ENCODE measurements at regions of chr5 and their contacts with region 1.

Region 1: GRCh38 chr5:16666883-16667398 is 50.1 kb upstream of the RETREG1 start:
- DNase-seq: peak in 6 of 9 experiments; percentile 19 to 66 (median 40)
- ATAC-seq: no peak
- H3K4me3 ChIP-seq: no peak overlapping the region
- H3K4me3 Mint-ChIP-seq: no peak overlapping the region
- H3K27ac ChIP-seq: no peak overlapping the region
- H3K27ac Mint-ChIP-seq: no peak overlapping the region
- H3K4me1 ChIP-seq: no peaks in the 10 kb centered on the region
- H3K4me1 Mint-ChIP-seq: peaks cover 18% of the 10 kb centered on the region
- H3K27me3 ChIP-seq: no peaks in the 10 kb centered on the region
- H3K27me3 Mint-ChIP-seq: no peaks in the 10 kb centered on the region
- CTCF ChIP-seq: peak; percentile 59

Region 2: GRCh38 chr5:16456103-16456832 is 210.7 kb before region 1 on chr5:
- CTCF ChIA-PET with region 1: interaction called, 30 read pairs
- POLR2A ChIA-PET with region 1: no interaction called
- intact Hi-C with region 1: loop called in 1 of 2 experiments (anchors 2 kb)
- DNase-seq: peak in 4 of 9 experiments; percentile 20 to 80 (median 51)
- ATAC-seq: peak; percentile 76
- H3K4me3 ChIP-seq: no peak overlapping the region
- H3K4me3 Mint-ChIP-seq: peak overlapping the region; percentile 29
- H3K27ac ChIP-seq: peak overlapping the region in 1 of 2 experiments; percentile 41
- H3K27ac Mint-ChIP-seq: peak overlapping the region; percentile 65
- H3K4me1 ChIP-seq: peaks cover 38% of the 10 kb centered on the region
- H3K4me1 Mint-ChIP-seq: peaks cover 67% of the 10 kb centered on the region
- H3K27me3 ChIP-seq: no peaks in the 10 kb centered on the region
- H3K27me3 Mint-ChIP-seq: no peaks in the 10 kb centered on the region
- CTCF ChIP-seq: peak; percentile 77

Region 3: DNA sequence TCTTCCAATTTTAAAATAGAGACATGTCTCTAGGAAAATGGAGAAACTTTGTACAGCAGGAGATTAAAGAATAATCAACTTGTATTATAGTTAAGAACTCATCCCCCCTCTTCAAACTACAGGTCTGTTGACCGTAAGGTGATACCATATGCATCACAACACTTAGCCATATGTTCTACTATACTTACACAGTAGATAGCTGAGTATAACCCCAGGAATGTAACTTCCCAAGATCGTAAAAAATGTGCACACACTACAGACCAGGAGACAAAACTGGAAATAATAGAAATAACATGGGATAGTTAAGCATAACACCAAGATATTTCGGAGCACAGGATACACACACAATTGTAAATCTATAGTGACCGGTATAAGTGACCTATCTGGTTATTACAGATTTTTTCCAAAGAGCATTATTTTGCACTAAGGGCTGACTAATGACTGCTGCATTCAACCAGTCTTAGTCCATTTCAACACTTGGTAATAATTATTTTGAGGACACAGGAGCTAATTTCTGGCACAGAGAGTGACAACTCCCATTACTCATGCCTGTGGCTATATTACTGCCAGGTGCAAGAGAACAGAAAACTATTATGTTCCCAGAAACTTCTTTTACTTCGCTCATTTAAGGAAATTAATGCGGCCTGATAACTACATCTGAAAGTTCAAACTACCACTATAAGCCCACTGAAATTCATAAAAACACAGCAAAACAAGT is 186.0 kb before region 1 on chr5:
- CTCF ChIA-PET with region 1: interaction called, 24 read pairs
- POLR2A ChIA-PET with region 1: no interaction called
- intact Hi-C with region 1: no loop called
- DNase-seq: no peak
- ATAC-seq: no peak
- H3K4me3 ChIP-seq: no peak overlapping the region
- H3K4me3 Mint-ChIP-seq: no peak overlapping the region
- H3K27ac ChIP-seq: no peak overlapping the region
- H3K27ac Mint-ChIP-seq: peak overlapping the region; percentile 28
- H3K4me1 ChIP-seq: no peaks in the 10 kb centered on the region
- H3K4me1 Mint-ChIP-seq: peaks cover 17% of the 10 kb centered on the region
- H3K27me3 ChIP-seq: no peaks in the 10 kb centered on the region
- H3K27me3 Mint-ChIP-seq: no peaks in the 10 kb centered on the region
- CTCF ChIP-seq: no peak

Region 4: DNA sequence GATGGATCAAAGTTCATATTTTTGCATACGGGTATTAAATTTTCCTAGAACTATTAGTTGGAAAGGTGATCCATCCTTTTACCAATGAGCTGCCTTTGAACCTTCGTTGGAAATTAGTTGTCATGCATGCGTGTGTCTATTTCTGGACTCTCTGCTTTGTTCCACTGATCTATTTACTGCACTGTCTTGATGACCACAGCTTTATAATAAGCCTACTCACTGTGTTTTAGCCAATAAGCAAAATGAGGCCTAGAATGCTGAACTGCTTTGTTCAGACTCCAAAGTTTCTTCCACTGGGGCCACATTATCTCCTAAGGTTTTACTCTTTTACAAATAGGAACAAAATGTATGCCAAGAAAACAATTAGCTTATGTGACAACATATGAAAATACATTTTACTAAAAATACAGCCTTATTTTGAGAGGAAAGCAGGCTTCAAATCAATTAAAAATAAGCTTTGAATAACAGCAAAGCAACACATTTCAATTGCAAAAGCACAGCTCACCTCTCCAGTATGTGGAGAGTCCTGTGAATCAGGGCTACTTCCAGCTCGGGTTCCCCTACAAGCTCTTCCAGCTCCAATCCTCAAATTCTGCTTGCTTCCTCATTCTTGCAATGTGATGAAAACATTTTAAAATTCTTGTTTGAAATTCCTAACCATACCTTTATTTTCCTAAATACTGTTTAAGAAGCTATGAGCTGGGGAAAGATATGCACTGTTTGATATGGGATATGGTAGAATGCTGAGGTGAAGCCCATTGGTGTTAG is 122.2 kb before region 1 on chr5:
- CTCF ChIA-PET with region 1: interaction called, 18 read pairs
- POLR2A ChIA-PET with region 1: no interaction called
- intact Hi-C with region 1: no loop called
- DNase-seq: no peak
- ATAC-seq: no peak
- H3K4me3 ChIP-seq: no peak overlapping the region
- H3K4me3 Mint-ChIP-seq: no peak overlapping the region
- H3K27ac ChIP-seq: no peak overlapping the region
- H3K27ac Mint-ChIP-seq: no peak overlapping the region
- H3K4me1 ChIP-seq: peaks cover 23% of the 10 kb centered on the region
- H3K4me1 Mint-ChIP-seq: peaks cover 67% of the 10 kb centered on the region
- H3K27me3 ChIP-seq: no peaks in the 10 kb centered on the region
- H3K27me3 Mint-ChIP-seq: no peaks in the 10 kb centered on the region
- CTCF ChIP-seq: no peak

Region 5: GRCh38 chr5:16574789-16575721 is 91.9 kb before region 1 on chr5:
- CTCF ChIA-PET with region 1: interaction called, 8 read pairs
- POLR2A ChIA-PET with region 1: no interaction called
- intact Hi-C with region 1: loop called in 1 of 2 experiments (anchors 5 kb)
- DNase-seq: no peak
- ATAC-seq: no peak
- H3K4me3 ChIP-seq: no peak overlapping the region
- H3K4me3 Mint-ChIP-seq: no peak overlapping the region
- H3K27ac ChIP-seq: no peak overlapping the region
- H3K27ac Mint-ChIP-seq: peak overlapping the region; percentile 57
- H3K4me1 ChIP-seq: peaks cover 8% of the 10 kb centered on the region
- H3K4me1 Mint-ChIP-seq: peaks cover 44% of the 10 kb centered on the region
- H3K27me3 ChIP-seq: no peaks in the 10 kb centered on the region
- H3K27me3 Mint-ChIP-seq: no peaks in the 10 kb centered on the region
- CTCF ChIP-seq: no peak

Region 6: GRCh38 chr5:16616536-16617273 is 50.2 kb before region 1 on chr5 and contains the start of gene RETREG1:
- CTCF ChIA-PET with region 1: interaction called, 21 read pairs
- POLR2A ChIA-PET with region 1: interaction called, 12 read pairs
- intact Hi-C with region 1: loop called (anchors 1 to 5 kb)
- DNase-seq: peak; percentile 73 to 93 (median 90)
- ATAC-seq: peak; percentile 80
- H3K4me3 ChIP-seq: peak within 1 kb of the TSS; percentile 69 to 79
- H3K4me3 Mint-ChIP-seq: peak within 1 kb of the TSS; percentile 98
- H3K27ac ChIP-seq: peak within 1 kb of the TSS; percentile 93 to 97
- H3K27ac Mint-ChIP-seq: peak within 1 kb of the TSS; percentile 97
- H3K4me1 ChIP-seq: peaks cover 46% of the 10 kb centered on the region
- H3K4me1 Mint-ChIP-seq: peaks cover 48% of the 10 kb centered on the region
- H3K27me3 ChIP-seq: peaks cover 0 to 4% of the 10 kb centered on the region in 2 experiments
- H3K27me3 Mint-ChIP-seq: no peaks in the 10 kb centered on the region
- CTCF ChIP-seq: no peak
- total RNA-seq, gene RETREG1: 62.2 to 73.9 TPM

Region 7: GRCh38 chr5:16639206-16639605 is 27.7 kb before region 1 on chr5:
- CTCF ChIA-PET with region 1: interaction called, 10 read pairs
- POLR2A ChIA-PET with region 1: interaction called, 4 read pairs
- intact Hi-C with region 1: no loop called
- DNase-seq: no peak
- ATAC-seq: no peak
- H3K4me3 ChIP-seq: no peak overlapping the region
- H3K4me3 Mint-ChIP-seq: no peak overlapping the region
- H3K27ac ChIP-seq: no peak overlapping the region
- H3K27ac Mint-ChIP-seq: no peak overlapping the region
- H3K4me1 ChIP-seq: no peaks in the 10 kb centered on the region
- H3K4me1 Mint-ChIP-seq: peaks cover 7% of the 10 kb centered on the region
- H3K27me3 ChIP-seq: no peaks in the 10 kb centered on the region
- H3K27me3 Mint-ChIP-seq: no peaks in the 10 kb centered on the region
- CTCF ChIP-seq: no peak

Region 8: DNA sequence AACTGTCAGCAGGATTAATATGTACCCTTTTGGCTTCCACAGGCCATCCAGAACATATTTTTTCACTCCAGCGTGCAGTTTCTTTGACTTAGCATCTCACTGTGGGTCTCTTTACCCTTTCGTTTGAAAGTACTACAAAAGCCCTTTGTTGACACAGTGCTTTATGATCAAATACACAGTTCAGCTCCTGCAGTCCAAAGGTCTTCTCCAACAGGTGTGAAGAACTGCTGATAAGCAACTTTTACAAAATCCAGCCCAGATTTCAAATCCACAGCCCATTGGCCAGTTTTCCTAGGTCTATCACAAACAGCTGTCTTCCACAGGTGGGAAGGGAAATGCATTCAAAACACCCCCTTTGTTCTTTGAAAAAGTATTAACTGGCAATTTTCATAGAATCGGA is 214.3 kb after region 1 on chr5:
- CTCF ChIA-PET with region 1: no interaction called
- POLR2A ChIA-PET with region 1: no interaction called
- intact Hi-C with region 1: no loop called
- DNase-seq: no peak
- ATAC-seq: no peak
- H3K4me3 ChIP-seq: no peak overlapping the region
- H3K4me3 Mint-ChIP-seq: no peak overlapping the region
- H3K27ac ChIP-seq: no peak overlapping the region
- H3K27ac Mint-ChIP-seq: no peak overlapping the region
- H3K4me1 ChIP-seq: no peaks in the 10 kb centered on the region
- H3K4me1 Mint-ChIP-seq: no peaks in the 10 kb centered on the region
- H3K27me3 ChIP-seq: no peaks in the 10 kb centered on the region
- H3K27me3 Mint-ChIP-seq: peaks cover 4% of the 10 kb centered on the region
- CTCF ChIP-seq: no peak

Measured in CD8-positive, alpha-beta T cell (primary cell).